ENCODE measurements at regions of chr5 and their contacts with region 1.

Region 1: GRCh38 chr5:10987930-10988504 is 227.0 kb upstream of the DAP start:
- DNase-seq: no peak
- ATAC-seq: peak; percentile 90
- H3K4me3 ChIP-seq: no peak overlapping the region
- H3K27ac ChIP-seq: no peak overlapping the region
- H3K4me1 ChIP-seq: no peaks in the 10 kb centered on the region
- H3K27me3 ChIP-seq: peaks cover 0 to 2% of the 10 kb centered on the region in 2 experiments; a peak in 2 of 4 replicates
- CTCF ChIP-seq: peak; percentile 86 to 89 (median 88)
- EP300 ChIP-seq: no peak
- POLR2A ChIP-seq: no peak
- RAD21 ChIP-seq: peak; percentile 85

Region 2: DNA sequence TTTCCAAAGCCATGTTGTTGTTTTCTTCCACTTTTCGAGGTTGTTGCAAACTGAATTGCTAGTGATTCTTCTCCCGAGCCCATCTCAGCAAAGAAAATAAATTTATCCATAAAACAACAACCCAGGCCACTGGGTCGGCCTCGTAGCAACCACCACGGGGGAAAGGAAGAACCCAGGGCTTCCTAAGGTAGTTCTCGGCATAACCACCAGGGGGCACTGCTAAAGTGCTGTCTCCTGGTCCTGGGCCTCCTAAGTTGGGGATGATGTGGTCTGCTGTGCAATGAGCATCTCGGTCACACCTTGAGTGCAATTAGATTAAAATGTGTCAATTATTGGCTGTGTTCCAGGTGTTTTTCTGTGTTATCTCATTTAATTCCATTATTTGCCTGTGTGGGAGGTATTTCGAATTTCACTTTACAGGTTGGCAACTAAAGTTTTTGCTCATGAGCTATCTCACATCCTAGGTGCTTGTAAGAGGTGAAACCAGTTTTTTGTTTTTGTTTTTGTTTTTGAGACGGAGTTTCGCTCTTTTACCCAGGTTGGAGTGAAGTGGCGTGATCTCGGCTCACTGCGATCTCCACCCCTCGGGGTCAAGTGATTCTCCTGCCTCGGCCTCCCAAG is 124.1 kb before region 1 on chr5:
- CTCF ChIA-PET with region 1: interaction called, 3 read pairs
- POLR2A ChIA-PET with region 1: no interaction called
- RAD21 ChIA-PET with region 1: no interaction called
- SMC1A ChIA-PET with region 1: interaction called, 4 read pairs
- in situ Hi-C with region 1: no loop called
- intact Hi-C with region 1: loop called (anchors 5 kb)
- DNase-seq: peak; percentile 8
- ATAC-seq: peak; percentile 98
- H3K4me3 ChIP-seq: no peak overlapping the region
- H3K27ac ChIP-seq: no peak overlapping the region
- H3K4me1 ChIP-seq: no peaks in the 10 kb centered on the region
- H3K27me3 ChIP-seq: peaks cover under 1 to 1% of the 10 kb centered on the region in 2 experiments; a peak in 1 of 4 replicates
- CTCF ChIP-seq: peak; percentile 75 to 93 (median 91)
- EP300 ChIP-seq: no peak
- POLR2A ChIP-seq: no peak
- RAD21 ChIP-seq: peak; percentile 66

Region 3: GRCh38 chr5:10902145-10902544 is 85.9 kb before region 1 on chr5:
- CTCF ChIA-PET with region 1: no interaction called
- POLR2A ChIA-PET with region 1: no interaction called
- RAD21 ChIA-PET with region 1: no interaction called
- SMC1A ChIA-PET with region 1: no interaction called
- in situ Hi-C with region 1: no loop called
- intact Hi-C with region 1: no loop called
- DNase-seq: no peak
- ATAC-seq: no peak
- H3K4me3 ChIP-seq: no peak overlapping the region
- H3K27ac ChIP-seq: no peak overlapping the region
- H3K4me1 ChIP-seq: no peaks in the 10 kb centered on the region
- H3K27me3 ChIP-seq: no peaks in the 10 kb centered on the region
- CTCF ChIP-seq: no peak
- EP300 ChIP-seq: no peak
- POLR2A ChIP-seq: no peak
- RAD21 ChIP-seq: no peak

Region 4: GRCh38 chr5:11000515-11001353 is 12.7 kb after region 1 on chr5:
- CTCF ChIA-PET with region 1: interaction called, 20 read pairs
- POLR2A ChIA-PET with region 1: no interaction called
- RAD21 ChIA-PET with region 1: interaction called, 8 read pairs
- SMC1A ChIA-PET with region 1: interaction called, 22 read pairs
- in situ Hi-C with region 1: no loop called
- intact Hi-C with region 1: no loop called
- DNase-seq: no peak
- ATAC-seq: no peak
- H3K4me3 ChIP-seq: no peak overlapping the region
- H3K27ac ChIP-seq: no peak overlapping the region
- H3K4me1 ChIP-seq: no peaks in the 10 kb centered on the region
- H3K27me3 ChIP-seq: no peaks in the 10 kb centered on the region; a peak in 1 of 4 replicates
- CTCF ChIP-seq: no peak
- EP300 ChIP-seq: no peak
- POLR2A ChIP-seq: no peak
- RAD21 ChIP-seq: no peak

Region 5: GRCh38 chr5:11037080-11037479 is 49.1 kb after region 1 on chr5:
- CTCF ChIA-PET with region 1: interaction called, 98 read pairs
- POLR2A ChIA-PET with region 1: no interaction called
- RAD21 ChIA-PET with region 1: interaction called, 11 read pairs
- SMC1A ChIA-PET with region 1: interaction called, 16 read pairs
- in situ Hi-C with region 1: no loop called
- intact Hi-C with region 1: loop called (anchors 5 kb)
- DNase-seq: no peak
- ATAC-seq: peak; percentile 83
- H3K4me3 ChIP-seq: no peak overlapping the region
- H3K27ac ChIP-seq: no peak overlapping the region
- H3K4me1 ChIP-seq: no peaks in the 10 kb centered on the region
- H3K27me3 ChIP-seq: no peaks in the 10 kb centered on the region
- CTCF ChIP-seq: no peak
- EP300 ChIP-seq: no peak
- POLR2A ChIP-seq: no peak
- RAD21 ChIP-seq: no peak

Region 6: GRCh38 chr5:11046160-11046559 is 58.1 kb after region 1 on chr5:
- CTCF ChIA-PET with region 1: interaction called, 98 read pairs
- POLR2A ChIA-PET with region 1: no interaction called
- RAD21 ChIA-PET with region 1: interaction called, 8 read pairs
- SMC1A ChIA-PET with region 1: interaction called, 16 read pairs
- in situ Hi-C with region 1: no loop called
- intact Hi-C with region 1: no loop called
- DNase-seq: no peak
- ATAC-seq: peak; percentile 57
- H3K4me3 ChIP-seq: no peak overlapping the region
- H3K27ac ChIP-seq: no peak overlapping the region
- H3K4me1 ChIP-seq: no peaks in the 10 kb centered on the region
- H3K27me3 ChIP-seq: no peaks in the 10 kb centered on the region
- CTCF ChIP-seq: peak in 1 of 3 experiments; percentile 61; a peak in 2 of 6 replicates
- EP300 ChIP-seq: no peak
- POLR2A ChIP-seq: no peak
- RAD21 ChIP-seq: peak; percentile 35; the same call in 1 of the 2 replicates

Region 7: DNA sequence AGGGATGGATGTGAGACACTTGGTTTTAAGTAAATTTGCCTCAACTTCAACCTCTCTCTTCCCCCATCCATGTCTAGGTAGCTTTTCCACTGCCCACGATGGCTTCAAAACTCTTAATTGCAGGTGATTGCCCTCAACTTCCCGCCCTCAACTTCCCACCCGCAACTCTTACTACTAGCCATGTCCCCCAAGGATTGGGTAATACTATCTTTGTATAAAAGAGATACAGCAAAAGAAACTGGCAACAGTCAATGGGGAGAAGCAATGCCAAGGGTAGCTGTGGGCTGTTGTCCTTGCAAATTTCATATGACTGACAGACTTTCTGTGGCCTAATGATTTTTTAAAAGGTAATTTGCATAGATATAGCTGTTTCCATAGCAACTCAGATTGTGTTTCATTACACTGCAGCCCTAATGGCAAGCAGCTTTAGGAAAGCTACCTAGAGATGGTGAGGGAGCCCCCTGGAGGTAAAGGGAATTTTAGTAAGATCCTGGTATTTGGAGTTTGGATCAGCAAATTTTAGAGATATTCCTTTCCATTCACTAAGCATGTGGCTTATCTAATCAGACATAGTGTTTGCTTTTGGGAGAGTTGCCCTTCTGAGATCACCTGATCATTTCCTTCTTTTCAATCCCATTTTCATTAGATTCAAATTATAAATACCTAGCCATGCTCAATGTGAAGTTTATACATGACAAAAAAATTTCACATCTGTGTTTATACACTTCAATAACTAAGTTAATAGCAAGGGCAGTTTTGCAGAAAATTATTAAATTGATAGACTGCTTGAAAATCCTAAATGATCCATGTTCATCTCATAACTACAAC is 194.6 kb after region 1 on chr5:
- CTCF ChIA-PET with region 1: interaction called, 11 read pairs
- POLR2A ChIA-PET with region 1: no interaction called
- RAD21 ChIA-PET with region 1: interaction called, 4 read pairs
- SMC1A ChIA-PET with region 1: no interaction called
- in situ Hi-C with region 1: no loop called
- intact Hi-C with region 1: loop called (anchors 1 kb)
- DNase-seq: no peak
- ATAC-seq: peak; percentile 54
- H3K4me3 ChIP-seq: no peak overlapping the region
- H3K27ac ChIP-seq: no peak overlapping the region
- H3K4me1 ChIP-seq: no peaks in the 10 kb centered on the region
- H3K27me3 ChIP-seq: no peaks in the 10 kb centered on the region
- CTCF ChIP-seq: peak; percentile 30 to 49 (median 38); a peak in 4 of 6 replicates
- EP300 ChIP-seq: no peak
- POLR2A ChIP-seq: no peak
- RAD21 ChIP-seq: peak; percentile 55

Region 8: GRCh38 chr5:11719888-11720481 is 732.0 kb after region 1 on chr5:
- CTCF ChIA-PET with region 1: no interaction called
- POLR2A ChIA-PET with region 1: no interaction called
- RAD21 ChIA-PET with region 1: no interaction called
- SMC1A ChIA-PET with region 1: no interaction called
- in situ Hi-C with region 1: no loop called
- intact Hi-C with region 1: loop called (anchors 10 kb)
- DNase-seq: no peak
- ATAC-seq: peak; percentile 54; the same call in 1 of the 3 replicates
- H3K4me3 ChIP-seq: no peak overlapping the region
- H3K27ac ChIP-seq: no peak overlapping the region
- H3K4me1 ChIP-seq: no peaks in the 10 kb centered on the region
- H3K27me3 ChIP-seq: no peaks in the 10 kb centered on the region
- CTCF ChIP-seq: peak; percentile 29 to 41 (median 36); a peak in 3 of 6 replicates
- EP300 ChIP-seq: no peak
- POLR2A ChIP-seq: no peak
- RAD21 ChIP-seq: peak; percentile 45

Region 9: GRCh38 chr5:11797132-11797531 is 809.1 kb after region 1 on chr5:
- CTCF ChIA-PET with region 1: no interaction called
- POLR2A ChIA-PET with region 1: no interaction called
- RAD21 ChIA-PET with region 1: no interaction called
- SMC1A ChIA-PET with region 1: no interaction called
- in situ Hi-C with region 1: no loop called
- intact Hi-C with region 1: no loop called
- DNase-seq: no peak
- ATAC-seq: no peak
- H3K4me3 ChIP-seq: no peak overlapping the region
- H3K27ac ChIP-seq: no peak overlapping the region
- H3K4me1 ChIP-seq: no peaks in the 10 kb centered on the region
- H3K27me3 ChIP-seq: no peaks in the 10 kb centered on the region
- CTCF ChIP-seq: no peak
- EP300 ChIP-seq: no peak
- POLR2A ChIP-seq: no peak
- RAD21 ChIP-seq: no peak